Mammary epithelial cell (primary cell): ENCODE measurements at regions of chr19 and their contacts with region 1.

Region 1: GRCh38 chr19:860481-861101 is 1.1 kb downstream of the CFD start:
- DNase-seq: peak; percentile 61
- H3K4me3 ChIP-seq: peak overlapping the region in 1 of 3 experiments; percentile 20
- H3K27ac ChIP-seq: no peak overlapping the region
- H3K4me1 ChIP-seq: peaks cover 4% of the 10 kb centered on the region
- H3K27me3 ChIP-seq: no peaks in the 10 kb centered on the region
- CTCF ChIP-seq: no peak

Region 2: DNA sequence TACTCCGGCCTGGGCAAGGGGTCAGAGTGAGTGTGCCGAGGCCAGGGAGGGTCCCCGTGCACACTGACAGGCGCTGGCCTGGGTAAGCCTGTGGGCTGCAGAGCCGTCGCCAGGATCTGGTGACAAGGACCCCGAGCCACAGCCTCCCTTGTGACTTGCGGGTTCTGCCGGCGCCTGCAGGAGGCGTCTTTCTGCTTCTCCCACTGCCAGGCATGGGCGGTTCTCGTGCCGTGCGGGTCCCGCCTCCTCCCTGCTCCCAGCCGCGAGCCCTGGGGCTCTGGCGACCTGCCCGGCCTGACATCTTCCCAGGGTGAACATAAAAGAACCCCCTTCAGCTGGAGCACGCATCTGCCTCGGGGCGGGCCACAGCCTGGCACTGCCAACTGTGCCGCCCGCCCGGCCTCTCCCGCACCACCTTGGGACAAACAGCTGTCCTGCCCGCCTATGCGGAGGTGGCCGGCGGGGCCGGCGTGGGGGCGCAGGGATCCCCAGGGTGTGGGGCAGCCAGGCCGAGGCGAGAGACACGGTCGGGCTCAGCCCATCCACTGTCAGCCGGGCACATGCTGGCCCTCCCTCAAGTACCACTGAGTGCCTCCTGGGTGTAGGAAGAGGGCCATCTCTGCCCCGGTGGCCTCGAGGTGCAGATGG is 272.4 kb before region 1 on chr19:
- CTCF ChIA-PET with region 1: interaction called, 3 read pairs
- dilution Hi-C with region 1: loop called (anchors 10 kb)
- in situ Hi-C with region 1: no loop called
- intact Hi-C with region 1: no loop called
- DNase-seq: peak; percentile 75
- H3K4me3 ChIP-seq: no peak overlapping the region
- H3K27ac ChIP-seq: no peak overlapping the region
- H3K4me1 ChIP-seq: peaks cover 17% of the 10 kb centered on the region
- H3K27me3 ChIP-seq: peaks cover 14% of the 10 kb centered on the region
- CTCF ChIP-seq: peak; percentile 44 to 75

Region 3: DNA sequence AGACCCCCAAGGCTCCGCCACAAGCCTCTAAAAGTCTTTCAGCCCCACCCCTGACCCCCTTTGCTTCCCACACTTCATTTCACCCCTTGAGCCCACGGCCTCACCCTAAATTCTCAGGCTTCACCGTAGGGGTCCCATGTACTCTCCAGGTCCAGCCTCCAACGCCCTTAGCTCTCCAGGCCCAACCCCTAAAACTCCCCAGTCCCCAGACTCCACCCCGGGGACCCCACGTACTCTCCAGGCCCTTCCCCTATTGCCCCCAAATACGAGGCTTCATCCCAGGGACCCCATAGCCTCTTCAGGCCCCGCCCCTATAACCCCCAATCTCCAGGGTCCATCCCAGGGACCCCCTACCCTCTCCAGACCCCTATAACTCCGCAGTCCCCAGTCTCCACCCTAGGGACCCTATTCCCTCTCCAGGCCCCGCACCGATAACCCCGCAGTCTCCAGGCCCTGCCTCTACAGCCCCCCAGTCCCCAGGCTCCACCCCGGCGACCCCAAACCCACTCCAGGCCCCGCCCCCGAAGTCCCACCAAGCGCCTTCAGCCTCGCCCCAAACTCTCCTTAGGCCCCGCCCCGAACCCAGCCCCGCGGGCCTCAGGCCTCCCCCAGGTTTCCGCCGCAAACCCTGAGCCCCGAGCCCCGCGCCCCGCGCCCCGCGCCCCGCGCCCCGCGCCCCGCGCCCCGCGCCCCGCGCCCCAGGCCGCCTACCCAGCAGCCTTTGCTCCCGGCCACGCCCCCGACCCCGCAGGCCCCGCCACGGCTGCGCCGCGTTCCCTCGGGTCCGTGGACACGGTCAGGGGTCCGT is 31.9 kb after region 1 on chr19:
- CTCF ChIA-PET with region 1: no interaction called
- dilution Hi-C with region 1: no loop called
- in situ Hi-C with region 1: no loop called
- intact Hi-C with region 1: loop called (anchors 2 kb)
- DNase-seq: no peak
- H3K4me3 ChIP-seq: peak overlapping the region; percentile 81 to 97 (median 96)
- H3K27ac ChIP-seq: peak overlapping the region; percentile 93
- H3K4me1 ChIP-seq: no peaks in the 10 kb centered on the region
- H3K27me3 ChIP-seq: no peaks in the 10 kb centered on the region
- CTCF ChIP-seq: no peak

Region 4: DNA sequence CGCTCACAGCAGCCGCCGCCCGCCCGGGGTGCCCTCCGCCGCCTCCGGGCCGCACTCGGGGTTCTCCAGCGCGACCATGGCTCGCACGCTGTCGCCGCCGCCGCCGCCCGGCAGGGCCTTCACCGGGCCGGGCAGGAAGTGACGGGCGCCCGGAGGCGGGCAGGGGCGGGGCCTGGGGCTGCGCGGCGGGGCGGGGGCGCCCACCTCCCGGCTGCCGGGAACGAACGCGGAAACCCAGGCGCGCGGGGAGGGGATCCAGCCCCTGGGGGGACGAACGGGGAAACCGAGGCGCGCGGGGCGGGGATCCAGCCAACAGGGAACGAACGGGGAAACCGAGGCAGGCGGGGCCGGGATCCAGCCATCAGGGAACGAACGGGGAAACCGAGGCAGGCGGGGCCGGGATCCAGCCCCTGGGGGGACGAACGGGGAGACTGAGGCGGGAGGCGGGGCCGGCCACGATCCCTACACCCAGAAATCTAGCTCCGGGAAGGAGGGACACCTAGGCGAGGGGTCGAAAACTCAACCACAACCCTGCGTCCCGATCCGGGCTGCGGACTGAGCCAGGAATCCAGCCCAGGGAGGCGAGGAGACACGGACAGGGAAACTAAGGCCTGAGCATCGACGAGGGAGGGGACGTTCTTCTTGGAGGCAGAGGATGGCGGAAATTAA is 52.6 kb after region 1 on chr19 and contains the start of gene R3HDM4:
- CTCF ChIA-PET with region 1: no interaction called
- dilution Hi-C with region 1: no loop called
- in situ Hi-C with region 1: no loop called
- intact Hi-C with region 1: loop called (anchors 1 kb)
- DNase-seq: peak; percentile 49
- H3K4me3 ChIP-seq: peak within 1 kb of the TSS; percentile 69 to 94 (median 88)
- H3K27ac ChIP-seq: peak within 1 kb of the TSS; percentile 55
- H3K4me1 ChIP-seq: peaks cover 29% of the 10 kb centered on the region
- H3K27me3 ChIP-seq: peaks cover 12% of the 10 kb centered on the region
- CTCF ChIP-seq: no peak
- total RNA-seq, gene R3HDM4: 39.3 to 53.1 TPM

Region 5: GRCh38 chr19:984165-984967 is 123.8 kb after region 1 on chr19 and contains the start of gene WDR18:
- CTCF ChIA-PET with region 1: no interaction called
- dilution Hi-C with region 1: no loop called
- in situ Hi-C with region 1: no loop called
- intact Hi-C with region 1: loop called (anchors 2 kb)
- DNase-seq: peak; percentile 83
- H3K4me3 ChIP-seq: peak within 1 kb of the TSS; percentile 79 to 99 (median 99)
- H3K27ac ChIP-seq: peak within 1 kb of the TSS; percentile 81
- H3K4me1 ChIP-seq: peaks cover 15% of the 10 kb centered on the region
- H3K27me3 ChIP-seq: no peaks in the 10 kb centered on the region
- CTCF ChIP-seq: peak in 1 of 2 donors; percentile 21
- total RNA-seq, gene WDR18: 42.0 to 84.1 TPM